Activated CD4-positive, alpha-beta memory T cell treated with anti-CD3 and anti-CD28 coated beads, Interleukin-2, amount 10 ng/mL, durations not matched to agents 7 days and 5 days (primary cell): ENCODE measurements at regions of chr2 and their contacts with region 1.

Region 1: DNA sequence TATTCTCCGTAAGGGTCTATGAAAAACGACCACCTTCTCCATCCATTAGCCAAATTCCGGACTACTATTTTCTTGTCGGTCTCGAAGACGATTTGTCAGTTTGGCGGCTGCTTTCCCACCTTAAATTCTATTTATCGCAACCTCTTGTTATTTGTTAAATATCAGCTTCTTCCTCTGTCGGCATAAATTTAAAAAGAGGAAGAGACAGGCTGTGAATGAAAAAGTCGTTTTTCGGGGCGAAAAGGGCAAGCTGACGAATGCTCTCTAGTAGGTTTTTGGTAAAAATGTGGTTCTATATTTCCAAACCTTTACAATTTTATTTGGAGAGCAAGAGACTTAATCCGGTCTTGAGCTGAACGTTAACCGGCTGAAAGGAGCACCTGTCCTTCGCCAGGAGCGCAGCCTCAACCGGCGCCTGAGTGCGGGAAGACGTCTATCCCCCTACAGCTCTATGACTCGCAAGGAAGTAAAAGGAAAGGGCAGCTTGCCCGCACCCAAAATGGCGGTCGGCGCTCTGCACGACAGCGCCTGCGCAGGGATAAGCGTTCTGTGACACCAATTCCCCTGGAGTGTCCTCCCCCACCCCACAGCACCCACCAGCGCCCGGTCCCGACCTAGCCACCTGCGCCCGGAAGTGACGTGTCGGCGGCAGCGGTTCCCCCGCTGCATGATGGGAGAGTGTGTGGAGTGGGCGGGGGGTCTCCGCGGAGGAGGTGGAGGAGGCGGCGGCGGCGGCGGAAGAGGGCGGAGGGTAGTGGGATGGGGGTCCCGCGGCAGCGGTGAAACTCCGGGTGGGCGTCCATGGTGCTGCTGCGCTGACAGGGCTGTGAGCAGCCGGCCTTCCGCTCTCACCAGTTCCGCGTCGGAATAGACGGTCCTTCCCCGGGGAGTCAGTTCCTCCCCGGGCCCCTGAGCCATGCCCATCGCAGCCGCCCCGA is at the start of gene AFTPH:
- DNase-seq: peak; percentile 100
- H3K4me3 Mint-ChIP-seq: peak within 1 kb of the TSS; percentile 97
- H3K27ac Mint-ChIP-seq: peak within 1 kb of the TSS; percentile 98
- H3K4me1 Mint-ChIP-seq: peaks cover 40% of the 10 kb centered on the region
- H3K27me3 Mint-ChIP-seq: peaks cover 2% of the 10 kb centered on the region
- total RNA-seq, gene AFTPH: 39.2 to 40.2 TPM

Region 2: GRCh38 chr2:64144057-64145013 is 379.6 kb before region 1 on chr2 and contains the start of gene PELI1:
- CTCF ChIA-PET with region 1: no interaction called
- POLR2A ChIA-PET with region 1: interaction called, 11 read pairs
- DNase-seq: peak; percentile 96
- H3K4me3 Mint-ChIP-seq: peak within 1 kb of the TSS; percentile 91
- H3K27ac Mint-ChIP-seq: peak within 1 kb of the TSS; percentile 88
- H3K4me1 Mint-ChIP-seq: peaks cover 24% of the 10 kb centered on the region
- H3K27me3 Mint-ChIP-seq: no peaks in the 10 kb centered on the region
- total RNA-seq, gene PELI1: 44.9 to 45.0 TPM

Region 3: DNA sequence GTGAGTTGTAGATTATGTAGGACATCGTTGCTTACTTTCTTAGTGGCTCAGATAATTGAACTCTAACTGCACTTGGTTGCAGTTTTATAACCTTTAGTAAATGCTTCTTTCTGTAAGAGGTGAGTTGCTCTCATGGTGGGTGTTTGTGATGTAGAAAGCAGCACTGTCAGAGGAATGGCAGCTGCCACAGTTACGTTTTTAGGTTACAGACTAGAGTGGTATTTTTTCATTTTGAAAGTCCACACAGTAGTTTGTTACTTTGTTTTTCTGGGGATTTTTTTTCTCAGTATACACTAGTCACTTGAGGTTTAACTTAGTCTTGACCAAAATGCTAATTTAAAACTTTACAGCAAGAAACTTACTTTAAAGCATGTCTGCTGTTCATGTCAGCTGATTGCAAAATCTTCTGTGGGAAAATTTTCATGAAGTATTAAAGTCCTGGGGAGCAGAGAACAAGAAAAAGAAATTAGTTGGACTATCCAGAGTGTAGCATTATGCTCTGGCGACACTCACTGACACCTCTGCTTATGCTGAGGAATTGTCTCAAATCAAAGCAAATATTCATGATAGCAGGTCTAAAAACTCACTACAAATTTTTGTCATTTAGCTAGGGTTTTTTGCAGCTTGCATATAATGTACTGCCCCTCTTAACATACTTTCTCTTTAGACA is 15.0 kb after region 1 on chr2:
- CTCF ChIA-PET with region 1: interaction called, 6 read pairs
- POLR2A ChIA-PET with region 1: interaction called, 43 read pairs
- DNase-seq: no peak
- H3K4me3 Mint-ChIP-seq: no peak overlapping the region
- H3K27ac Mint-ChIP-seq: no peak overlapping the region
- H3K4me1 Mint-ChIP-seq: peaks cover 52% of the 10 kb centered on the region
- H3K27me3 Mint-ChIP-seq: no peaks in the 10 kb centered on the region

Region 4: GRCh38 chr2:64574871-64575270 is 50.9 kb after region 1 on chr2:
- CTCF ChIA-PET with region 1: interaction called, 11 read pairs
- POLR2A ChIA-PET with region 1: interaction called, 7 read pairs
- DNase-seq: no peak
- H3K4me3 Mint-ChIP-seq: no peak overlapping the region
- H3K27ac Mint-ChIP-seq: peak overlapping the region; percentile 1
- H3K4me1 Mint-ChIP-seq: peaks cover 11% of the 10 kb centered on the region
- H3K27me3 Mint-ChIP-seq: no peaks in the 10 kb centered on the region

Region 5: GRCh38 chr2:64644177-64645004 is 120.5 kb after region 1 on chr2:
- CTCF ChIA-PET with region 1: interaction called, 10 read pairs
- POLR2A ChIA-PET with region 1: interaction called, 5 read pairs
- DNase-seq: peak; percentile 59
- H3K4me3 Mint-ChIP-seq: peak overlapping the region; percentile 81
- H3K27ac Mint-ChIP-seq: peak overlapping the region; percentile 85
- H3K4me1 Mint-ChIP-seq: peaks cover 39% of the 10 kb centered on the region
- H3K27me3 Mint-ChIP-seq: no peaks in the 10 kb centered on the region

Region 6: DNA sequence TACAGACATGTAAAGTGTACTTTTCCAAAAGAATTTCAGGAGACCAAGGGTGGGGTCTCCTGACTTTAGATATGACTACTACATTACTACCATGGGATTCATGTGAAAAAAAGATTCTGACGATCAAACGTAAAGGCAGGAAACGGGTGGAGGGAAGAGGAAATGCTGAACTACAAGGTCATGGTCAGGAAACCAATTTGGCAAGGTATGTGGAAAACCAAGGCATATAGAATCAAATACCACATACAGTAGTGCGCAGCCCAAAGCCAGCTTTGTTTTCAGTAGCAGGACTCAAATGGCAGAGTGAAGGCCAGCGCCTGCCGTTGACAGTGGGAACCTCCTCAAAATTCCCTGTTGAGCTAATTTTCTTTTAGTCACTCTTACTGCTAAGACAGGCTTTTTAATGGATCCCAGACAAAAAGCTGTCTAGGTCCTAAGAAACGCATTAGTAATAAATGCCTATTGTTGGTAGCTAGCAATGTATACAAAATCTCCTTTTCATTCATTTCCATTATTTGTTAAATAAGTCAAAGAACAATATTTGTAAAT is 187.4 kb after region 1 on chr2:
- CTCF ChIA-PET with region 1: no interaction called
- POLR2A ChIA-PET with region 1: no interaction called
- DNase-seq: no peak
- H3K4me3 Mint-ChIP-seq: no peak overlapping the region
- H3K27ac Mint-ChIP-seq: no peak overlapping the region
- H3K4me1 Mint-ChIP-seq: peaks cover 9% of the 10 kb centered on the region
- H3K27me3 Mint-ChIP-seq: no peaks in the 10 kb centered on the region

Region 7: GRCh38 chr2:64750817-64751285 is 226.9 kb after region 1 on chr2:
- CTCF ChIA-PET with region 1: interaction called, 7 read pairs
- POLR2A ChIA-PET with region 1: interaction called, 22 read pairs
- DNase-seq: peak; percentile 98
- H3K4me3 Mint-ChIP-seq: peak overlapping the region; percentile 84
- H3K27ac Mint-ChIP-seq: peak overlapping the region; percentile 94
- H3K4me1 Mint-ChIP-seq: peaks cover 23% of the 10 kb centered on the region
- H3K27me3 Mint-ChIP-seq: no peaks in the 10 kb centered on the region

Region 8: DNA sequence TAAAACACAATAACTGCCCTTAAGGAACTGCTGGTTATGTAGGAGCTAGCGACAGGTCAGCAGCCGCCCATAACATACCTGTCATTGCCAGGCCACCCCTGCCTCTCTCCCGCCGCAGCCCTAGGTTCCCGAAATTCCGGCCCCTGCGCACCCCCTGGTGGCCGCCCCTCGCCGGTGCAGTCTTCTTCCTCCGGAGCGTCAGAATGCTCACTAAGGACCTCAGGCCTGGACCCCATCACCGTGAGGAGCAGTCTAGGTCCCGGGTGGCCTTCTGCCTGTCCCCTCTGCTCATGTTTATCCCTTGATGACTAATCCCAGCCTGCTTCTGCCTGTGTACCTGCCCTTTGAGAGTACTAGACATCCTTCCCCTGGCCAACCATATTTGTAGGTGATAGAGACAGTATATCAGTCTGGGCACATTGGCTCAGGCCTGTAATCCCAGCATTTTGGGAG is 349.6 kb after region 1 on chr2:
- CTCF ChIA-PET with region 1: interaction called, 16 read pairs
- POLR2A ChIA-PET with region 1: no interaction called
- DNase-seq: peak; percentile 80
- H3K4me3 Mint-ChIP-seq: no peak overlapping the region
- H3K27ac Mint-ChIP-seq: no peak overlapping the region
- H3K4me1 Mint-ChIP-seq: peaks cover 7% of the 10 kb centered on the region
- H3K27me3 Mint-ChIP-seq: peaks cover 13% of the 10 kb centered on the region